ENCODE measurements at regions of chr6 and their contacts with region 1.

Region 1: DNA sequence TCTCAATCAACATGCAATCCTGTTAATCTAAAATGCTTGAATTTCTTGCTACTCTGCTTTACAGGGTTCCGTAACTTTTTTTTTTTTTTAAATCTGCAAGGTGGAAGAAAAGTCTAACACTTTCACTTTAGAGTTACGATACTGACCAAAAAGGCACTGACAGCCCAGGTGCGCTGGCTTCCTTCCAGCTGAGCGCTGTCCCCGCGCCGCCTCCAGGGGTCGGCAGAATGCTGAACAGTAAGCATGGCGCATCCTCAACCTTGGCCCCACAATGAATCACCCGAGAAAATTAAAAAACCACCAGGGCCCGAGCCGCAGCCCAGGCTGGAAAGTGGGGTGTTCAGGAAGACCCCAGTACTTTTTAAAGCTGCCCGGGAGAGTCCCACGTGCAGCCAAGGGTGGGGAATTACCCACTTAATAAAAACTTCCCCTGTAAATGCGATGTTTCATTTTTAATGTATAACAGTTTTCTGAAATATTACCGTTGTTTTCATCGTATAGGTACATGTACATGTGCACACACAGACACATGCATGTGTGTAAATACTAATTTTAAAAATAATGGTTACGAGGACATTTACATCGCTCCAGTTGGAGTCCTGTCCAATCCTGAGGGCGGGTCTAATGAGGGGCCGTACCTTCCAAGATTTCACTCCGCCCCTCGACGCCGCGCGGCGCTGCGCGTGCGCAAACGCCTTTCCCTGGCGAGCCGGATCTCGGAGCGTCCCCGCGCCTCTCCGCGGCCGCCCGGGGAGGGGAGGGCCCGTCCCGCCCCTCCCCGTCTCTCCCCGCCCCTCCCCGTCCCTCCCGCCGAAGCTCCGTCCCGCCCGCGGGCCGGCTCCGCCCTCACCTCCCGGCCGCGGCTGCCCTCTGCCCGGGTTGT is at the start of gene GINM1:
- DNase-seq: peak; percentile 91
- ATAC-seq: peak; percentile 89
- H3K4me3 ChIP-seq: peak within 1 kb of the TSS; percentile 86 to 94
- H3K27ac ChIP-seq: peak within 1 kb of the TSS; percentile 71
- H3K4me1 ChIP-seq: peaks cover 8 to 14% of the 10 kb centered on the region in 2 experiments; a peak in 3 of 4 replicates
- H3K27me3 ChIP-seq: no peaks in the 10 kb centered on the region
- CTCF ChIP-seq: peak; percentile 51 to 76 (median 75); a peak in 5 of 6 replicates
- POLR2A ChIP-seq: no peak
- RAD21 ChIP-seq: peak; percentile 72
- total RNA-seq, gene GINM1: 25.0 TPM

Region 2: GRCh38 chr6:149545754-149546528 is 19.8 kb before region 1 on chr6 and contains the start of gene PPIL4:
- CTCF ChIA-PET with region 1: interaction called, 7 read pairs
- POLR2A ChIA-PET with region 1: interaction called, 3 read pairs
- RAD21 ChIA-PET with region 1: interaction called in 1 of 2 experiments, 5 read pairs
- intact Hi-C with region 1: loop called (anchors 1 kb)
- DNase-seq: peak; percentile 87
- ATAC-seq: peak; percentile 89
- H3K4me3 ChIP-seq: peak within 1 kb of the TSS; percentile 66 to 96
- H3K27ac ChIP-seq: peak within 1 kb of the TSS; percentile 89
- H3K4me1 ChIP-seq: peaks cover 5 to 21% of the 10 kb centered on the region in 2 experiments; a peak in 3 of 4 replicates
- H3K27me3 ChIP-seq: no peaks in the 10 kb centered on the region; the same call in 1 of the 2 replicates
- CTCF ChIP-seq: peak; percentile 76 to 97 (median 89)
- POLR2A ChIP-seq: peak; percentile 48
- RAD21 ChIP-seq: peak; percentile 77
- total RNA-seq, gene PPIL4: 31.0 TPM

Region 3: GRCh38 chr6:149648148-149649145 is 82.7 kb after region 1 on chr6 and contains the start of gene KATNA1:
- CTCF ChIA-PET with region 1: interaction called, 3 read pairs
- POLR2A ChIA-PET with region 1: interaction called, 3 read pairs
- RAD21 ChIA-PET with region 1: no interaction called
- intact Hi-C with region 1: loop called (anchors 5 kb)
- DNase-seq: peak; percentile 83
- ATAC-seq: peak; percentile 94
- H3K4me3 ChIP-seq: peak within 1 kb of the TSS; percentile 77 to 94
- H3K27ac ChIP-seq: peak within 1 kb of the TSS; percentile 54
- H3K4me1 ChIP-seq: peaks cover 3 to 17% of the 10 kb centered on the region in 2 experiments; a peak in 3 of 4 replicates
- H3K27me3 ChIP-seq: no peaks in the 10 kb centered on the region
- CTCF ChIP-seq: no peak
- POLR2A ChIP-seq: peak; percentile 89
- RAD21 ChIP-seq: peak; percentile 31; the same call in 1 of the 2 replicates
- total RNA-seq, gene KATNA1: 20.6 TPM

Region 4: GRCh38 chr6:149717588-149718458 is 152.1 kb after region 1 on chr6 and contains the start of gene LATS1:
- CTCF ChIA-PET with region 1: no interaction called
- POLR2A ChIA-PET with region 1: no interaction called
- RAD21 ChIA-PET with region 1: no interaction called
- intact Hi-C with region 1: loop called (anchors 5 kb)
- DNase-seq: peak; percentile 43
- ATAC-seq: peak; percentile 85
- H3K4me3 ChIP-seq: peak within 1 kb of the TSS; percentile 79 to 82
- H3K27ac ChIP-seq: peak within 1 kb of the TSS; percentile 97
- H3K4me1 ChIP-seq: peaks cover 4 to 19% of the 10 kb centered on the region in 2 experiments; a peak in 3 of 4 replicates
- H3K27me3 ChIP-seq: no peaks in the 10 kb centered on the region
- CTCF ChIP-seq: no peak
- POLR2A ChIP-seq: peak; percentile 91
- RAD21 ChIP-seq: no peak
- total RNA-seq, gene LATS1: 21.6 TPM

Measured in HCT116 (cell line).